AG04449 (cell line): ENCODE measurements at regions of chr6 and their contacts with region 1.

Region 1: DNA sequence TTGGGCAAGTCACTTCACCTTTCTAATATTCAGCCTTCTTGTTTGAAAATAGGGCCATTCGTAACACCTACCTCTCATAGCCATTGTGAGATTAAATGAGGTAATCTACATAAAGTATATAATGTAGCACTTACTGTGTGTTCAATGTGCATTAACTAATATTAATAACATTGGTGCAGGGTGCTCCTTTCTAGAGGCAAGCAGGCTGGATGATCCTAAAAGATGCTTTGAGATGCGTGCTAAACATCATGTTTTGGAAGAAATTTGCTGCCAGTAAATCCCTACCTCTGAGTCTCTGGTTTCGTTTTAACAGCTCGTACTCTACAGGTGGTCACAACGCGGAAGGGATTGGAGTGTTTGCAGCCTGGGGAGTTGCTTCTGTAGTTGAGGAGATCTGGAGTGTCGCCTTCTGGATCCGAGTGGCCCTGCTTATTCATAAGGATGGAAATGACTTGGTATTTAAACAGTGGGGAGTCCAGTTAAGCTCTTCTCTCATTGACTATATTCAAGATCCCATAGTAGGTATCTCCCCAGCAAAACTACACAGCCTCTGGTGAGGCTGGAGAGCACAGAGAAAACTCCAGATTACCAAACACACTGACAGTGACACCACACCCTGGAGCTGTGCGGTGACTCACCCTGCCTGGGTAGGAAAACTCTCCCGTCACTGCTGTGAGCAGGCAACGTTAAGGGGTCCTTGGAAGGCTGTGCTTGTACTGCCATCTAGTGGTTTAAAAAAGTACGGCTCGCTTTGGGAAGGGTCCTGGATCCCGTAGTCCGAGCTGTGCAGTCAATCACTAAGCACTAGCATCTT is 107.9 kb downstream of the MAP3K7 start:
- DNase-seq: peak; percentile 65
- H3K4me3 ChIP-seq: no peak overlapping the region
- CTCF ChIP-seq: peak; percentile 71

Region 2: GRCh38 chr6:89934685-89935366 is 544.2 kb before region 1 on chr6:
- CTCF ChIA-PET with region 1: interaction called, 291 read pairs
- POLR2A ChIA-PET with region 1: no interaction called
- DNase-seq: no peak
- H3K4me3 ChIP-seq: no peak overlapping the region
- CTCF ChIP-seq: no peak

Region 3: DNA sequence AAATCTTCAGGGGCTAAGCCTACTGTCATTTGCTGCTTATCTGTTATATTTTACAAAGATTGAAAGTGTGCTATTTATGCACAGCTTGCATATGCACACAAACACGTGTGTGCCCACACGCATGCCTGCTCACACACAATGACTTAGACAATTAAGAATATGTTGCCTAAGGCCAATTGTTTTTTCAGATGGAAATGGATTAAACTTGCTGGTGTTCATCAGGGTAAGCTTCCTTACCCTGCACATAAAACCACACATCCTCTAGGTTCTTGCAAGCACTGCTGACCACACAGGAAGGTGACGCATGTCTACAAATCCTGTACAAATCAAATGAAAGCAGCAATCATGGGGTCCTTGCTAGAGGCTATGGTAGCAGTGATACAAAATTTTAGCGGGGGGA is 526.3 kb before region 1 on chr6:
- CTCF ChIA-PET with region 1: interaction called, 13 read pairs
- POLR2A ChIA-PET with region 1: no interaction called
- DNase-seq: peak; percentile 78
- H3K4me3 ChIP-seq: no peak overlapping the region
- CTCF ChIP-seq: no peak

Region 4: GRCh38 chr6:89970609-89971337 is 508.2 kb before region 1 on chr6:
- CTCF ChIA-PET with region 1: interaction called, 60 read pairs
- POLR2A ChIA-PET with region 1: no interaction called
- DNase-seq: no peak
- H3K4me3 ChIP-seq: no peak overlapping the region
- CTCF ChIP-seq: peak; percentile 58

Region 5: GRCh38 chr6:90186637-90187371 is 292.2 kb before region 1 on chr6:
- CTCF ChIA-PET with region 1: no interaction called
- POLR2A ChIA-PET with region 1: no interaction called
- DNase-seq: no peak
- H3K4me3 ChIP-seq: no peak overlapping the region
- CTCF ChIP-seq: no peak

Region 6: GRCh38 chr6:90209527-90209926 is 269.5 kb before region 1 on chr6:
- CTCF ChIA-PET with region 1: no interaction called
- POLR2A ChIA-PET with region 1: no interaction called
- DNase-seq: no peak
- H3K4me3 ChIP-seq: no peak overlapping the region
- CTCF ChIP-seq: no peak

Region 7: GRCh38 chr6:90434094-90434493 is 44.9 kb before region 1 on chr6:
- CTCF ChIA-PET with region 1: no interaction called
- POLR2A ChIA-PET with region 1: no interaction called
- DNase-seq: no peak
- H3K4me3 ChIP-seq: no peak overlapping the region
- CTCF ChIP-seq: peak; percentile 4

Region 8: DNA sequence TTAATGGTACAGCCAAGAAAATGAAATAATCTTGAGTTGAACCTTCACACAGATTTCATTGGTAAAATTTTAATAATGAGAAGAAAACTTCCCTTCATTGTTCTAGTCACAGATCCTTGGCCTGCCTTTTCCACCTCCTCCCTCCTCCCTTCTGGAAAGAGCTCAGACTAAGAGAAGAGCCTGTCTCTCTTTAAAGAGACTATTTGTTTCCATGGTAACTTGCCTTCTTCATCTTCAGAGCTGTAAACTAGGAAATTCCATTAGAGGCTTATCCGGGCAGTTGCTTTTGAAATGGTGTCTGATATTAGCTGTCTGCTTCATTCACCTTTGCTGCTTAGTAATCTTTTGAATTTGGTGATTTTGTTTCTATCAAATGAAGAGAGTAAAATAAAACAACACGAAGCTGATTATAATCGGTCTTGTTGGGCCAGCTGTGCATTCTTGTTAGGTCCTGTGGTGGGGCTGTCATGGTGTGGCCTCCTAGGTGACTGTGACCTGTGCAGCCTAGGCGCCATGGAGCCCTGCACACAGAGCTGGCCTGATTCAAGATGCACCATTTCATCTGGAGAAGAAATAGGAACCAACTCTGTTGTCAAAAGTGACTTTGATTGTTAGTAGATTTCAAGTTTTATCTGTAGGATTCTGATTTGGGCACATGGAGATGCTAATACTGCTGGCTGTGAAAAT is 11.2 kb after region 1 on chr6:
- CTCF ChIA-PET with region 1: interaction called, 12 read pairs
- POLR2A ChIA-PET with region 1: no interaction called
- DNase-seq: no peak
- H3K4me3 ChIP-seq: no peak overlapping the region
- CTCF ChIP-seq: no peak